Activated T-helper 1 cell treated with anti-CD3 and anti-CD28 coated beads, Interleukin-12 subunit alpha, Interleukin-12 subunit beta, Interleukin-2, Interleukin-4 antibody, amounts not matched to agents 30 ng/mL and 10 ng/mL and 1 ng/mL, durations not matched to agents 14 hours and 24 hours and 36 hours (primary cell): ENCODE measurements at regions of chr6 and their contacts with region 1.

Region 1: DNA sequence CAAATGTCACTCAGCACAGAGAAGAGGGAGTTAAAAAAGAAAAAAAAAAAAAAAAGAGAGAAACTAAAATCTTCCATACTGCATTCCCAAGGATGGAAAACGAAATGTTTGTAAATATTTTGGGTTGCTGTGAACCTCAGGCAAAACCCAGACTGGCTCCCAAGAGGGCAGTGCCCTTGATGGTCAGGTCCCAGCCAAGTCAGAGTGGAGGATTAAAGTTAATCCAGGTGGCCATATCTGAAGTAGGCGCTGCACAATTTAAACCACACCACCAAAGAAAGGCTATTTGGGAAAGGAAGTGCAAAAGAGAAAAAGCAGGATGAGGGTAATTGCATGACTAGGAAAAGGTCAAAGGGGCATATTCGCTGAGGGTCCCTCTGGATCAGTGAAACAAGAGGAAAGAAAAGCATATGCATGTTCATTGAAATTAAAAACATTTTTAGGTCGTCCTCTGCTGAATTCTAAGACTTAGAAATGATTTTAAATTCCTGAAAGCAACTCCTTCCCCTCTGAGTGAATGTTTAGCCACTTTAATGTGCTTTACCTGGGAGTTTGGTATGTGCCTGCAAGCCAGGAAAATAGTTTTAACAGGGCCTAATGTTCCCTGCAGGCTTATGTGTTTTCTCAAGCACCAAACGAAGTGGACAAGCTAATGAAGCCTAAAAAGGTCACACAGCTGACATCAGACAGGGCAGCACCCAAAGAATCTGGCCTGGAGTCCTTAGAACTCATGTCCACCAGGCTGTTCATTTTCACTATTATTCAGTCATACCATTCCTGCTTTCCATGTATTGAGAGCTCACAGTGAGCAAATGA is 159.1 kb downstream of the HACE1 start:
- DNase-seq: no peak
- H3K4me3 Mint-ChIP-seq: no peak overlapping the region
- H3K27ac Mint-ChIP-seq: no peak overlapping the region
- H3K4me1 Mint-ChIP-seq: peaks cover 29% of the 10 kb centered on the region
- H3K27me3 Mint-ChIP-seq: no peaks in the 10 kb centered on the region

Region 2: DNA sequence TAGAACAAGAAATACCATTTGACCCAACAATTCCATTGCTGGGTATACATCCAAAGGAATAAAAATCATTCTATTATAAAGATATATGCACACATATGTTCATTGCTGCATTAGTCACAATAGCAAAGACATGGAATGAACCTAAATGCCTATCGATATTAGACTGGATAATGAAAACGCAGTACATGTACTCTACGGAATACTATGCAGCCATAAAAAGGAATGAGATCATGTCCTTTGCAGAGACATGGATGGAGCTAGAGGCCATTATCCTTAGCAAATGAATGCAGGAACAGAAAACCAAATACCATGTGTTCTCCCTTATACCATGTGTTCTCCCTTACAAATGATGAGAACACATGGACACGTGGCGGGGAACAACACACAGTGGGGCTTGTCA is 31.1 kb before region 1 on chr6:
- intact Hi-C with region 1: loop called (anchors 1 kb)
- DNase-seq: no peak
- H3K4me3 Mint-ChIP-seq: no peak overlapping the region
- H3K27ac Mint-ChIP-seq: no peak overlapping the region
- H3K4me1 Mint-ChIP-seq: no peaks in the 10 kb centered on the region
- H3K27me3 Mint-ChIP-seq: peaks cover 4% of the 10 kb centered on the region

Region 3: DNA sequence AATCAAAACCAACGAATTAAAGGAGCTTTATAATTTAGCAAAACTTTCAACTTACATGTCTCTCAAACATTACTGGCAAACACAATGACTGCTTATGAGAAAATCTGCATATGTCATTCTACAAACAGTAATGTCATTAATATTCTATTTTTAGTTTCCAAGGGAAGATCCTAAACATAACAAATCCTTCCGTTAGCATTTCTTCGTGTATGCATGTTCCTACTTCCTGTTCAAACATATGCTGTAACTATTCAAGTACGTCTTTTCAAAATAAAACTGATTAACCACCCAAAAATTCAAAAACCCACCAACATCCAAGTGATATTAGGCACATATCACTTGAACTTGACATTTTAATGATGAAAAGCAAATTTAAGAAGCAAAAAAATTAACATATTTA is 27.9 kb after region 1 on chr6:
- intact Hi-C with region 1: no loop called
- DNase-seq: no peak
- H3K4me3 Mint-ChIP-seq: no peak overlapping the region
- H3K27ac Mint-ChIP-seq: no peak overlapping the region
- H3K4me1 Mint-ChIP-seq: no peaks in the 10 kb centered on the region
- H3K27me3 Mint-ChIP-seq: no peaks in the 10 kb centered on the region

Region 4: GRCh38 chr6:104858646-104859045 is 158.1 kb after region 1 on chr6:
- intact Hi-C with region 1: no loop called
- DNase-seq: no peak
- H3K4me3 Mint-ChIP-seq: peak overlapping the region; percentile 95
- H3K27ac Mint-ChIP-seq: peak overlapping the region; percentile 82
- H3K4me1 Mint-ChIP-seq: peaks cover 24% of the 10 kb centered on the region
- H3K27me3 Mint-ChIP-seq: no peaks in the 10 kb centered on the region